GM12878 (cell line): ENCODE measurements at regions of chr15 and their contacts with region 1.

Region 1: GRCh38 chr15:72092006-72092405 is 25.9 kb downstream of the MYO9A start:
- DNase-seq: no peak
- ATAC-seq: no peak
- H3K4me3 ChIP-seq: no peak overlapping the region
- H3K27ac ChIP-seq: no peak overlapping the region
- H3K4me1 ChIP-seq: no peaks in the 10 kb centered on the region
- H3K27me3 ChIP-seq: no peaks in the 10 kb centered on the region
- CTCF ChIP-seq: no peak
- EP300 ChIP-seq: no peak
- POLR2A ChIP-seq: no peak
- RAD21 ChIP-seq: no peak

Region 2: DNA sequence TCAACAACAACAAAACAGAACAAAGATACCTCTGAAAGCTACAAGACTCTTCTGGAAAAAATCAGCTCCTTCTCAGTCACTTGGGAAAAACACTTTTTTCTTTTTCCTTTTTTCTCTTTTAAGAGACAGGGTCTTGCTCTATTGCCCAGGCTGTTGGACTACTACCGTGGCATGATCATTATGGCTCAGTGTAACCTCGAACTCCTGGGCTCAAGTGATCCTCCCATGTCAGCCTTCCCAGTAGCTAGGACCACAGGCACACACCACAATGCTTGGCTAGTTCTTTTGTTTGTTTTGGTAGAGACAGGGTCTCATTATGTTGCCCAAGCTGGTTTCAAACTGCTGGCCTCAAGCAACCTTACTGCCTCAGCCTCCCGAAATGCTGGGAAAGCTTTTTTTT is 13.1 kb after region 1 on chr15:
- CTCF ChIA-PET with region 1: no interaction called
- POLR2A ChIA-PET with region 1: no interaction called
- RAD21 ChIA-PET with region 1: no interaction called
- SMC1A ChIA-PET with region 1: interaction called, 10 read pairs
- in situ Hi-C with region 1: no loop called
- intact Hi-C with region 1: no loop called
- DNase-seq: no peak
- ATAC-seq: no peak
- H3K4me3 ChIP-seq: no peak overlapping the region
- H3K27ac ChIP-seq: no peak overlapping the region
- H3K4me1 ChIP-seq: no peaks in the 10 kb centered on the region
- H3K27me3 ChIP-seq: no peaks in the 10 kb centered on the region
- CTCF ChIP-seq: no peak
- EP300 ChIP-seq: no peak
- POLR2A ChIP-seq: no peak
- RAD21 ChIP-seq: no peak

Region 3: DNA sequence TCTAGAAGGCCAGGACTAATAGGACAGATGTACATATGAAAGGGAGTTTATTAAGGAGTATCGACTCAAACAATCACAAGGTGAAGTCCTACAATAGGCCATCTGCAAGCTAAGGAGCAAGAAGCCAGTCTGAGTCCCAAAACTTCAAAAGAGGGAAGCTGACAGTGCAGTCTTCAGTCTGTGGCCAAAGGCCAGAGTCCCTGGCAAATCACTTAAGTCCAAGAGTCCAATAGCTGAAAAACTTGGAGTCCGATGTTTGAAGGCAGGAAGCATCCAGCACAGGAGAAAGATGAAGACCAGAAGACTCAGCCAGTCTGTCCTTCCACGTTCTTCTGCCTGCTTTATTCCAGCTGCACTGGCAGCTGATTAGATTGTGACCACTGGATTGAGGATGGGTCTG is 239.0 kb after region 1 on chr15:
- CTCF ChIA-PET with region 1: no interaction called
- POLR2A ChIA-PET with region 1: no interaction called
- RAD21 ChIA-PET with region 1: no interaction called
- SMC1A ChIA-PET with region 1: no interaction called
- in situ Hi-C with region 1: no loop called
- intact Hi-C with region 1: no loop called
- DNase-seq: no peak
- ATAC-seq: no peak
- H3K4me3 ChIP-seq: no peak overlapping the region
- H3K27ac ChIP-seq: no peak overlapping the region
- H3K4me1 ChIP-seq: no peaks in the 10 kb centered on the region
- H3K27me3 ChIP-seq: no peaks in the 10 kb centered on the region
- CTCF ChIP-seq: no peak
- EP300 ChIP-seq: no peak
- POLR2A ChIP-seq: no peak
- RAD21 ChIP-seq: no peak